A673 (cell line): ENCODE measurements at regions of chr13 and their contacts with region 1.

Region 1: GRCh38 chr13:48769107-48769704 is 115.5 kb downstream of the CYSLTR2 start:
- DNase-seq: peak; percentile 88
- H3K4me3 ChIP-seq: no peak overlapping the region
- H3K27ac ChIP-seq: no peak overlapping the region
- H3K4me1 ChIP-seq: no peaks in the 10 kb centered on the region
- H3K27me3 ChIP-seq: peaks cover 8% of the 10 kb centered on the region
- CTCF ChIP-seq: peak; percentile 99

Region 2: DNA sequence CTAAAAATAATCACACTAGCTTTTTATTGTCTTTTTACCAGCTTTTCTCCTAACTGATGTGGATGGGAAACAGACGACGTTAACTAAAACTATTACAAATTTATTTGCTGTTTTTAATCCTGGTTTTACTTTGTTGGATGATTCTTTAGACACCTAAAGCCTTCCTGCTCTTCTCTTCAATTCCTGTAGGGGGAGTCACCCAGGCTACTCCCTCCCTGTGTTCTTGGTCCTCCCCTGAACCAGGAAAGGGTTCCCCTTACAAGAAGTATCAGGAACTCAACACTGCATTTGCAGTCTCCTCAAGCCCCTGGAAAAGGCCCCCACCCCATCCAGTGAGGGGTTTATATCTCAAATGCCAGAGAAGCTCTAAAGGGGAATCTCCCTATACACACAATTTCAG is 974.2 kb before region 1 on chr13:
- CTCF ChIA-PET with region 1: no interaction called
- POLR2A ChIA-PET with region 1: no interaction called
- intact Hi-C with region 1: loop called (anchors 10 kb)
- DNase-seq: peak; percentile 37
- H3K4me3 ChIP-seq: no peak overlapping the region
- H3K27ac ChIP-seq: no peak overlapping the region
- H3K4me1 ChIP-seq: no peaks in the 10 kb centered on the region
- H3K27me3 ChIP-seq: no peaks in the 10 kb centered on the region
- CTCF ChIP-seq: peak; percentile 68

Region 3: GRCh38 chr13:47990920-47991466 is 778.2 kb before region 1 on chr13:
- CTCF ChIA-PET with region 1: no interaction called
- POLR2A ChIA-PET with region 1: no interaction called
- intact Hi-C with region 1: no loop called
- DNase-seq: no peak
- H3K4me3 ChIP-seq: no peak overlapping the region
- H3K27ac ChIP-seq: no peak overlapping the region
- H3K4me1 ChIP-seq: no peaks in the 10 kb centered on the region
- H3K27me3 ChIP-seq: no peaks in the 10 kb centered on the region
- CTCF ChIP-seq: no peak

Region 4: GRCh38 chr13:48037346-48038173 is 731.6 kb before region 1 on chr13 and contains the start of gene NUDT15:
- CTCF ChIA-PET with region 1: no interaction called
- POLR2A ChIA-PET with region 1: interaction called, 3 read pairs
- intact Hi-C with region 1: loop called (anchors 5 kb)
- DNase-seq: peak; percentile 99
- H3K4me3 ChIP-seq: peak within 1 kb of the TSS; percentile 58
- H3K27ac ChIP-seq: peak within 1 kb of the TSS; percentile 97
- H3K4me1 ChIP-seq: peaks cover 8% of the 10 kb centered on the region
- H3K27me3 ChIP-seq: no peaks in the 10 kb centered on the region
- CTCF ChIP-seq: peak; percentile 99
- total RNA-seq, gene NUDT15: 48.6 and 52.2 TPM in 2 replicates

Region 5: GRCh38 chr13:48050550-48050949 is 718.7 kb before region 1 on chr13:
- CTCF ChIA-PET with region 1: no interaction called
- POLR2A ChIA-PET with region 1: no interaction called
- intact Hi-C with region 1: no loop called
- DNase-seq: no peak
- H3K4me3 ChIP-seq: no peak overlapping the region
- H3K27ac ChIP-seq: no peak overlapping the region
- H3K4me1 ChIP-seq: no peaks in the 10 kb centered on the region
- H3K27me3 ChIP-seq: no peaks in the 10 kb centered on the region
- CTCF ChIP-seq: no peak

Region 6: GRCh38 chr13:48126944-48127830 is 642.0 kb before region 1 on chr13:
- CTCF ChIA-PET with region 1: no interaction called
- POLR2A ChIA-PET with region 1: no interaction called
- intact Hi-C with region 1: loop called (anchors 2 kb)
- DNase-seq: peak; percentile 93
- H3K4me3 ChIP-seq: peak overlapping the region; percentile 7
- H3K27ac ChIP-seq: peak overlapping the region; percentile 67
- H3K4me1 ChIP-seq: peaks cover 10% of the 10 kb centered on the region
- H3K27me3 ChIP-seq: no peaks in the 10 kb centered on the region
- CTCF ChIP-seq: peak; percentile 82

Region 7: GRCh38 chr13:48334534-48335127 is 434.6 kb before region 1 on chr13:
- CTCF ChIA-PET with region 1: interaction called, 6 read pairs
- POLR2A ChIA-PET with region 1: no interaction called
- intact Hi-C with region 1: loop called (anchors 2 kb)
- DNase-seq: peak; percentile 47
- H3K4me3 ChIP-seq: no peak overlapping the region
- H3K27ac ChIP-seq: no peak overlapping the region
- H3K4me1 ChIP-seq: no peaks in the 10 kb centered on the region
- H3K27me3 ChIP-seq: no peaks in the 10 kb centered on the region
- CTCF ChIP-seq: peak; percentile 72

Region 8: GRCh38 chr13:48370815-48371214 is 398.4 kb before region 1 on chr13:
- CTCF ChIA-PET with region 1: no interaction called
- POLR2A ChIA-PET with region 1: no interaction called
- intact Hi-C with region 1: no loop called
- DNase-seq: no peak
- H3K4me3 ChIP-seq: no peak overlapping the region
- H3K27ac ChIP-seq: no peak overlapping the region
- H3K4me1 ChIP-seq: no peaks in the 10 kb centered on the region
- H3K27me3 ChIP-seq: no peaks in the 10 kb centered on the region
- CTCF ChIP-seq: no peak

Region 9: DNA sequence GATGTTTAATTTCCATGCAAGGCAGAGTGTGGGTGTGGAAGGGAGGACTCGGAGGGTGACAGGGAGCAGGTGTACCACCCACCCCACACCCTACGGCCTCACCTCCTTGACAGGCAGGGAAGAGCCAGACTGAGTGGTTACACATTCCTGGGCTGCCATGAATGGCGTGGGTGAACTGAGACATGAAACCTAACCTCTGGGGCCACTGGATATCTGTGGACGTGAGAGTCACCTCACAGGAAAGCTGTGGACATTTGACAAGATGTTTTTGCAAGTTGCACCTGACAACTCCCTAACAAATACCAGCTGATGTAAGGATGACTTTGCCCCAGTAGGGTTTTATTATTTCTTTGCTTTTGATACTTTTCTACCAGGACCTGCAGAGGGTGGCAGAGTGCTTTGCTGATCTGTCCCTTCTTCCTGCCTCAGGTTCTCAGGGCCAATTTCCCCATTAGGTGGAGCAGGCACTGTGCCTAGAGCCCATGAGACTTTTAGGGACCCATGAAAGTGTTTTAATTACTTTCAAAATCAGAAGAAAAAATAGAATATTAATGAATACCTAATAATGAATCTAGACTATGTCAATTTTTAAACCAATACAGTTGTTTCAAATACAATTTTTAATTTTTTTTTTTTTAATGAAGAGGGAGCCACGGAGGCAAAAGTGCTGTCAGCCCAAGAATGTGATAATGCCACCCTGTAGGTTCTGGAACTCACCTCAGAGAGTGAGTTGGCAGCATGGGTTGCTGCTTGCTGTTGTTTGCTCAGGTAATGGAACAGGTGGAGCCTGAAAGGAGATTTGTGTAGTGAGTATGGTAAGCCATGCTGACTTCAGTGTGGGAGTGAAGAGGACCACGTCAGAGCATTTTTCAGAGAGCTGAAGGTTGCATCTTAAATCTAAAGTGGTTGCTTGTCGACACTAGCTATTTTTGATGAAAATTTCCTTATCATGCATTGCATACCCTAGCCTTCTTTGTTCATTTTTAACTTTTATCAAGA is 173.5 kb before region 1 on chr13:
- CTCF ChIA-PET with region 1: interaction called, 3 read pairs
- POLR2A ChIA-PET with region 1: no interaction called
- intact Hi-C with region 1: loop called (anchors 1 kb)
- DNase-seq: peak; percentile 53
- H3K4me3 ChIP-seq: no peak overlapping the region
- H3K27ac ChIP-seq: no peak overlapping the region
- H3K4me1 ChIP-seq: no peaks in the 10 kb centered on the region
- H3K27me3 ChIP-seq: no peaks in the 10 kb centered on the region
- CTCF ChIP-seq: peak; percentile 61